Activated CD4-positive, alpha-beta memory T cell treated with anti-CD3 and anti-CD28 coated beads for 36 hours (primary cell): ENCODE measurements at regions of chr3 and their contacts with region 1.

Region 1: DNA sequence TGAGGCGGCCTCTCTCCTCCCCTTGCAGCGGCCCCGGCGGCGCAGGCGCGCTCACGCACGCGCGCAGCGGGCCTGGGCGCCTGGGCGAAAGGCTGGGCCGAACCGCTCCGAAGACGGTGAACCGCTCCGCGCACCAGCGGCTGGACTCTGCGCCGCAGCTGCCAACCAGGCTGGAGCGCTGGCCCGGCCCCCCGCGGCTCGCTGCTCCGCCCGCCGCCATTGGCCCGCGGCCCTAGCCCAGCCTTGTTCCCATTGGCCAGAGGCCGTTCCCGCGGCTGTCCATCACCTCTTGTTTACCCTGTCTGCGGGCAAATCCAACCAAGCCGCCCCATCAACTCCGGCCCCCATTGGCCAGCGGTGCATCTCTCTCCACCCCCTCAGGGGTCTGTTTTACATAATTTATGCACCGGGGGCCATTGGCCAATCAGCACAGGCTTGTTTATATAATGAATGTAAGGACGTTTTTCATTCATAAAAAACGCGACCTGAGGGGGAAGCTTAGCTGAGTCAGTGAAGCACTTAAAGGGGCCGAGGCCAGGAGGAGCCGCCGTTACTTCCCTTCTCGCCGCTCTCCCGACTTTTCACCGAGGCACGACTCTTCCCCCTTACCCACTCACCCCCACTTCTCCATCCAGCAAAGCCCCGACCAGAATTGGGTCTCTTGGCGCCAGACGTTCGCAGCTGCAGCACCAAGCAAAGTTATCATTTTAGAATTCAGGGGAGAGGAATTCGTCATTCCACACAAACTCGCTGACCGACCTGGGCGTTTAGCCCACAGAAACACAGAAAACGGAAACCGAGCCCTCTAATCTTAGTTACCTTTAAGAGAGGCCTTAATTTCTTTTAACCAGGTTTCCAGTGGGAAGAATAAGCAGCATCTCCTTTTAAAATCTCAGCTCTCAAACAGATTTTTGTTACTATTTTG is at the start of gene ETV5:
- DNase-seq: peak; percentile 96
- H3K4me3 Mint-ChIP-seq: peak within 1 kb of the TSS; percentile 67
- H3K27ac Mint-ChIP-seq: no peak within 1 kb of the TSS
- H3K4me1 Mint-ChIP-seq: peaks cover 42% of the 10 kb centered on the region
- H3K27me3 Mint-ChIP-seq: peaks cover 77% of the 10 kb centered on the region
- total RNA-seq, gene ETV5: 0.74 to 1.3 TPM

Region 2: GRCh38 chr3:185937689-185938463 is 171.3 kb before region 1 on chr3 and contains the start of gene TRA2B:
- CTCF ChIA-PET with region 1: interaction called, 3 read pairs
- POLR2A ChIA-PET with region 1: interaction called, 3 read pairs
- intact Hi-C with region 1: loop called (anchors 1 kb)
- DNase-seq: peak; percentile 99
- H3K4me3 Mint-ChIP-seq: peak within 1 kb of the TSS; percentile 99
- H3K27ac Mint-ChIP-seq: peak within 1 kb of the TSS; percentile 99
- H3K4me1 Mint-ChIP-seq: peaks cover 21% of the 10 kb centered on the region
- H3K27me3 Mint-ChIP-seq: peaks cover 3% of the 10 kb centered on the region
- total RNA-seq, gene TRA2B: 184 to 187 TPM

Region 3: GRCh38 chr3:186044973-186045372 is 64.2 kb before region 1 on chr3:
- CTCF ChIA-PET with region 1: no interaction called
- POLR2A ChIA-PET with region 1: no interaction called
- intact Hi-C with region 1: no loop called
- DNase-seq: no peak
- H3K4me3 Mint-ChIP-seq: no peak overlapping the region
- H3K27ac Mint-ChIP-seq: no peak overlapping the region
- H3K4me1 Mint-ChIP-seq: no peaks in the 10 kb centered on the region
- H3K27me3 Mint-ChIP-seq: peaks cover 50% of the 10 kb centered on the region

Region 4: GRCh38 chr3:186060222-186060621 is 49.0 kb before region 1 on chr3:
- CTCF ChIA-PET with region 1: no interaction called
- POLR2A ChIA-PET with region 1: no interaction called
- intact Hi-C with region 1: loop called (anchors 2 kb)
- DNase-seq: peak; percentile 43
- H3K4me3 Mint-ChIP-seq: no peak overlapping the region
- H3K27ac Mint-ChIP-seq: no peak overlapping the region
- H3K4me1 Mint-ChIP-seq: peaks cover 8% of the 10 kb centered on the region
- H3K27me3 Mint-ChIP-seq: peaks cover 36% of the 10 kb centered on the region

Region 5: GRCh38 chr3:186235554-186235953 is 126.4 kb after region 1 on chr3:
- CTCF ChIA-PET with region 1: no interaction called
- POLR2A ChIA-PET with region 1: no interaction called
- intact Hi-C with region 1: loop called (anchors 1 kb)
- DNase-seq: no peak
- H3K4me3 Mint-ChIP-seq: no peak overlapping the region
- H3K27ac Mint-ChIP-seq: no peak overlapping the region
- H3K4me1 Mint-ChIP-seq: peaks cover 6% of the 10 kb centered on the region
- H3K27me3 Mint-ChIP-seq: peaks cover 13% of the 10 kb centered on the region

Region 6: GRCh38 chr3:186259612-186260383 is 150.6 kb after region 1 on chr3:
- CTCF ChIA-PET with region 1: no interaction called
- POLR2A ChIA-PET with region 1: no interaction called
- intact Hi-C with region 1: loop called (anchors 5 kb)
- DNase-seq: peak; percentile 85
- H3K4me3 Mint-ChIP-seq: peak overlapping the region; percentile 24
- H3K27ac Mint-ChIP-seq: peak overlapping the region; percentile 65
- H3K4me1 Mint-ChIP-seq: peaks cover 27% of the 10 kb centered on the region
- H3K27me3 Mint-ChIP-seq: peaks cover 6% of the 10 kb centered on the region

Region 7: DNA sequence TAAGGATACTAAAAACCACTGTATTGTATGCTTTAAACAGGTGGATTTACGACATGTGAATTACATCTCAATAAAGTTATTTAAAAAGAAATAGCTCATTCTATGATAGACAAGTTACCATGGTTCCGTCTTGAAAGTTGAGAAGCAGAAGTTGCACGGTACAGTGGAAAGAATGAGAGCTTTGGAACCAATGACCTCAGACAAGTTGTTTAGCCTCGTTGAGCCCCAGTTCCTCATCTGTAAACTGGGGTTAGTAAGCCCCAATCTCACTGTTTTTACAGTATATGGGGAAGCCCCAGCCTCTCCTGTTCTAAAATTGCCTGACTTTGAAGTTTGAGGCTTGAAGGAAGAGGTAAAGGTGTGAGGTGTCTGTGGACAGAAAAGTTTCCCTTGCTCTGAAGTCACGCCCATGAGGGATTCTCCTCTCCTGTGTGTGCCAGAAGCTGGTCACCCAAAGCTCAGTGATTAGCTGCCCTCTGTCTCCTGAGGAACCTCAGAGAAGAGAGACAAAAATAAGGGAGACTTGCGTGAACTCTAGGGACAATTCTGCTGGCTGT is 425.0 kb after region 1 on chr3:
- CTCF ChIA-PET with region 1: no interaction called
- POLR2A ChIA-PET with region 1: no interaction called
- intact Hi-C with region 1: loop called (anchors 2 kb)
- DNase-seq: peak; percentile 70
- H3K4me3 Mint-ChIP-seq: peak overlapping the region; percentile 46
- H3K27ac Mint-ChIP-seq: peak overlapping the region; percentile 95
- H3K4me1 Mint-ChIP-seq: peaks cover 89% of the 10 kb centered on the region
- H3K27me3 Mint-ChIP-seq: no peaks in the 10 kb centered on the region

Region 8: DNA sequence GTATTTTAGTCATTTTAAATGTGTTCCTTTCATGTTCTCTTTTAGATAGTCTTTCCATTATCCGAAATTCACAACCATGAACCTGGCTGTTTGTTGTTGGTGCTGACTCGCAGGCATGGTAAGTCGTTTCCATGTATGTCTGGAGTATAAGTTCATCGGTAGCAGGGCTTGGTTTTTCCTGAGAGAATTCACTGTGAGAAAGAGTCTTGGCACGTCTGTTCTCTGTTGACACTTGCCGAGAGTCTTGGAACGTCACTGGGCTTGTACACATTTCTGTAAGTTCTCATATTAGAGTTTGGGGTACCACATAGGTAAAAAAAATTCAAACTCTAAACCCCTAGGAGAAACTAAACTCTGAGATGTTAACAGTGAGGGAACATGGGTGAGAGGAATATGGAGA is 644.8 kb after region 1 on chr3:
- CTCF ChIA-PET with region 1: no interaction called
- POLR2A ChIA-PET with region 1: no interaction called
- intact Hi-C with region 1: loop called (anchors 5 kb)
- DNase-seq: no peak
- H3K4me3 Mint-ChIP-seq: no peak overlapping the region
- H3K27ac Mint-ChIP-seq: peak overlapping the region; percentile 88
- H3K4me1 Mint-ChIP-seq: peaks cover 13% of the 10 kb centered on the region
- H3K27me3 Mint-ChIP-seq: peaks cover 6% of the 10 kb centered on the region